IMR-90 (cell line): ENCODE measurements at regions of chr15 and their contacts with region 1.

Region 1: DNA sequence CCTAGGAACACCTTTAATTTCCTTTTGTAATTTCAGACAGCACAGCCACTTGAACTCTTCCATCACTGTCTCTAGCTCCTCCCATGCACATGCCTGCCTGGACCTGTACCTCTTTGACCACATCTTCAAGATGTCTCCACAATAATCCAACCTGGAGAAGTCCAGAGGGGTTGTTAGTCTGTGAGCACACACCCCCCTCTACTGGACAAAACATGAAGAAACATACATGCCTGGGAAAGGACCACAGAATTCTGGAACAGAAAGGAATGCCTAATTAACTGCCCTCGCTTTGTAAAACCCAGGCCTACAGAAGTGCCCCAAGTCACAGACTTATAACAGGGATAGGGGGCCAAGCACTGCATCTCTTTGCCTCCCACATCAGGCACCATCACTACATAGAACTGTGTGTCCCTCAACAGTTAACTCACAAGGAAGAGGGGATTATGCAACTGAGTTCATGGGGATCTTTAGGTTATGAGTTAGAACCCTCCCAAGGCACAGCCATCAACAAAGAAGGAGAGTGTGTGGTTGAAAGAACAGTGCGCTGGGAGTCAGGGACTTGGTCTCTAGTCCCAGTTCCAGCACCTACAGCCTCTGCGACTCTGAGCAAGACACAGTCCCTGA is 61.7 kb downstream of the FMN1 start:
- DNase-seq: peak; percentile 76
- ATAC-seq: peak; percentile 94
- H3K4me3 ChIP-seq: no peak overlapping the region
- H3K27ac ChIP-seq: no peak overlapping the region
- H3K4me1 ChIP-seq: peaks cover 11% of the 10 kb centered on the region
- H3K27me3 ChIP-seq: no peaks in the 10 kb centered on the region
- CTCF ChIP-seq: peak; percentile 89
- POLR2A ChIP-seq: no peak
- RAD21 ChIP-seq: peak; percentile 95

Region 2: DNA sequence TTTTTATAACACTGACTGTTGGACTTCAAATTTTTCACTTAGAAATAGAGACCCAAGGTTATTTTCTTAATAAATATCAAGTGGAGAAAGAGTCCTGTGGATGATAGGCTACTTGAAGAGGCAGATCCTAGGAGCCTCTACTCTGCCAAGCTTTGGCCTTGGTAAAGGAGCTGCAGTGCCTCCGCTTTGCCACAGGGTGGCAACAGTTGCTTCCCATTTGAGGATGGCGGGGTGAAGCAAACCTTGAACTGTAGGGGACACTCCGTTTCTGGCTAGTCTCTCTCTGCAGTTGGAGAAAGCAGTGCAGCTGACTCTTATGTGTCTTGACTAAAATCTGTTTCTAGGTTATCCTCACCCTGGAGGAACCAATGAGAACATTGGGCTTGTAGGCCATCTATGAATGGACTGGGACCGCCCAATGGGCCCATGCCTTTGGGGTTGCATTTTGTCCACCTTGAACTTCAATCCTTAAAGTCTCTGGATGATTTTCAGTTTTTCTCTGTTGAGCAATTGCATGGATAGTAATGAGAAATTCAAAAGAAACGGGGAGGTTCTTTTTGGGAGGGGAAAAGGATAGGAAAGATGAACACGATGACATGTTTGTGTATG is 481.5 kb before region 1 on chr15:
- CTCF ChIA-PET with region 1: interaction called, 9 read pairs
- POLR2A ChIA-PET with region 1: no interaction called
- dilution Hi-C with region 1: no loop called
- in situ Hi-C with region 1: loop called (anchors 5 kb)
- intact Hi-C with region 1: loop called (anchors 5 kb)
- DNase-seq: peak; percentile 73
- ATAC-seq: peak; percentile 97
- H3K4me3 ChIP-seq: no peak overlapping the region
- H3K27ac ChIP-seq: no peak overlapping the region
- H3K4me1 ChIP-seq: peaks cover 4% of the 10 kb centered on the region; the same call in 1 of the 2 replicates
- H3K27me3 ChIP-seq: no peaks in the 10 kb centered on the region
- CTCF ChIP-seq: peak; percentile 92
- POLR2A ChIP-seq: no peak
- RAD21 ChIP-seq: peak; percentile 91

Region 3: GRCh38 chr15:32828507-32829186 is 304.2 kb before region 1 on chr15:
- CTCF ChIA-PET with region 1: no interaction called
- POLR2A ChIA-PET with region 1: no interaction called
- dilution Hi-C with region 1: no loop called
- in situ Hi-C with region 1: no loop called
- intact Hi-C with region 1: loop called (anchors 1 kb)
- DNase-seq: peak; percentile 96
- ATAC-seq: peak; percentile 74
- H3K4me3 ChIP-seq: no peak overlapping the region
- H3K27ac ChIP-seq: peak overlapping the region; percentile 68
- H3K4me1 ChIP-seq: peaks cover 39% of the 10 kb centered on the region
- H3K27me3 ChIP-seq: no peaks in the 10 kb centered on the region
- CTCF ChIP-seq: no peak
- POLR2A ChIP-seq: no peak
- RAD21 ChIP-seq: peak; percentile 30; the same call in 1 of the 2 replicates

Region 4: GRCh38 chr15:32861761-32862160 is 271.1 kb before region 1 on chr15:
- CTCF ChIA-PET with region 1: no interaction called
- POLR2A ChIA-PET with region 1: no interaction called
- dilution Hi-C with region 1: no loop called
- in situ Hi-C with region 1: no loop called
- intact Hi-C with region 1: loop called (anchors 10 kb)
- DNase-seq: peak; percentile 73
- ATAC-seq: peak; percentile 63
- H3K4me3 ChIP-seq: no peak overlapping the region
- H3K27ac ChIP-seq: peak overlapping the region; percentile 95
- H3K4me1 ChIP-seq: peaks cover 21% of the 10 kb centered on the region
- H3K27me3 ChIP-seq: no peaks in the 10 kb centered on the region
- CTCF ChIP-seq: no peak
- POLR2A ChIP-seq: no peak
- RAD21 ChIP-seq: no peak

Region 5: DNA sequence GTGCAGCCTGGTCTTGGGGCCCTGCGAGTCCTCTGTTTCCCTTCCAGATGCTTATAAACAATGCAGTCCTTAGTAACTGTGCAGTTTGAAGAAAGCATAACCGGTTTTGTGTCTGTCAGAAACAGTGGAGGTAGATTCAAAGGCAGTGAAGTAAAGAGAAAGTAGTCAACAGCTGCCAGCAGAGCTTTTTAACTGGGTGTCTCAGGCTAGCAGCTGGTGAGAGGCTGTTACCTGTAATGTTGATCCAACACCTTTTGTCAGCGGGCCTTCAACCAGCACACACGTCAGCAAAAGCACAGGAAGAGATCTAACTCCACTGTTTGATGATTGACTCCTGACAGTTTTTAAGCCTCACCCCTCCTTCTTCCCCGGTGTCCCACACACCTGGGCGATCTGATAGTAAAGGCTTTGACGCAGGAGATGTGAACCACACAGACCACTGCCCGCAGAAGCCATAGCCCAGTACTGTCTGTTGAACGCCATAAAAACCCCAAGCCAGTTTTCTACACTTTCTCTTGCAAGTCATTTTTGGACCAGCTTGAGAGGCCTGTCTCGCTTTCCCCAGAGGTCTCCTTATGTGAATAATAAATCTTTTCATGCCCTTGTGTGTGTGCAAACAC is 116.3 kb before region 1 on chr15:
- CTCF ChIA-PET with region 1: interaction called, 7 read pairs
- POLR2A ChIA-PET with region 1: no interaction called
- dilution Hi-C with region 1: no loop called
- in situ Hi-C with region 1: loop called (anchors 5 kb)
- intact Hi-C with region 1: no loop called
- DNase-seq: no peak
- ATAC-seq: no peak
- H3K4me3 ChIP-seq: no peak overlapping the region
- H3K27ac ChIP-seq: no peak overlapping the region
- H3K4me1 ChIP-seq: peaks cover 8% of the 10 kb centered on the region
- H3K27me3 ChIP-seq: no peaks in the 10 kb centered on the region
- CTCF ChIP-seq: no peak
- POLR2A ChIP-seq: no peak
- RAD21 ChIP-seq: no peak

Region 6: DNA sequence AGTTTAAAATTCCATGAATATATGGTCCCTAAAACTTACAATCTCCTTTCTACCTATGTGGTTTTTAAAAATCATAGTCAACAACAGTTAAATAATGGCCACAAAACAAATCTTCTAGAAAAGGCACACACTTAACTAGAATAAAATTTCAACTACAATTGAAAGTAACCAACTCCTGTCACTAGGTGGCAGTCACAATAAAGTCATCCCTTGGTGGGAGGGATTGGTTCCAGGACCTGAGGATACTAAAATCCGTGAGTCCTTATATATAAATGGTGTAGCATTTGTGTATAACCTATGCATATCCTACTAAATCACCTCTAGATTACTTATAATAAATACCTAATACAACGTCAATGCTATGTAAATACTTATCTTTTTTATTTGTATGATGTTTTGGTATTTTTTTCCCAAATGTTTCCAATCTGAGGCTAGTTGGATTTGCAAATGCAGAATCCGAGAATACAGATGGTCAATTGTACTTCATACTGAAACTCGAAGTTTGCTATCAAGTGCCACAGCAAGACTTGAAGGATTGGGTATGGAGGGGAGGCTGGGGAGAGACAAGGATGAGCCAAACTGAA is 110.9 kb before region 1 on chr15:
- CTCF ChIA-PET with region 1: interaction called, 7 read pairs
- POLR2A ChIA-PET with region 1: no interaction called
- dilution Hi-C with region 1: no loop called
- in situ Hi-C with region 1: loop called (anchors 5 kb)
- intact Hi-C with region 1: loop called (anchors 1 kb)
- DNase-seq: peak; percentile 75
- ATAC-seq: peak; percentile 77
- H3K4me3 ChIP-seq: no peak overlapping the region
- H3K27ac ChIP-seq: peak overlapping the region; percentile 55; the same call in 1 of the 2 replicates
- H3K4me1 ChIP-seq: peaks cover 12% of the 10 kb centered on the region
- H3K27me3 ChIP-seq: no peaks in the 10 kb centered on the region
- CTCF ChIP-seq: peak; percentile 66
- POLR2A ChIP-seq: no peak
- RAD21 ChIP-seq: peak; percentile 75

Region 7: DNA sequence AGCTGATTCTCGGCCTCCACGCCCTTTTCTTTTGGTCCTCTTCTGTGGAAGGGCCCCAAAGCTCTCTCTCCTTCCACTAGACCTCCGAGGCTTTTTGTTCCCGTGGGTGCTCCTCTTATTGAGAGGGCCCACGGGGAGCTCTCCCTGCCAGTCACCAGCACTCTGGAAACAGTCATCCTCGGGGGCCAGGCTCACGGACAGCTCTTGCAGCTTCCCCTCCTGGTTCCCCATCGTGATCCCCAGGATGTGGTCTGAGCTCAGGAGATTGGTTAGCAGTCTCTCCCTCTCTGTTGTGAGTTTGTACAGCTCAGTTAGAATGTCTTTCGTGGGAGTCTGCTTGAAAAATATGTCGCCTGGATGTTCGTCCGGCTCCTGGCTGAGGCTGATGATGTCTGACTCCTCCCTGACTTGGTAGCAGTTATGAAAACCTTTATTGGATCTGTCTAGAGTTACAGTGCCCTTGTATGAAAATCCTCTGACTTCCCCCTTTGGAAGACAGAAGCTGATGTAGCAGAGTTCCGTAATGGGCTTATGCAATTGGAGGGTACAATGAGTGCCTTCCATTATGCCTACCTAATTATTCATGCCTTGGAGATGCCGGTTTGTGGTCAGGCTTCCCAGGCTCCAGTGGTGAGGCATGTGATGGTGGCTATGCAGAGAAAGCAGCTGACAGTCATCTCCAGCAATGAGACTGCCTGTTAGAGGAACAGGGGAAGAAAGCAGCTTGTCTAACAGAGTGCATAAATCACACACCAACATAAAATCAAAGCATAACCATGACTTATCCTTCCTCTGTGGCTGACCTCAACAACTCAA is 21.7 kb after region 1 on chr15:
- CTCF ChIA-PET with region 1: no interaction called
- POLR2A ChIA-PET with region 1: no interaction called
- dilution Hi-C with region 1: no loop called
- in situ Hi-C with region 1: no loop called
- intact Hi-C with region 1: no loop called
- DNase-seq: peak; percentile 55
- ATAC-seq: peak; percentile 29; the same call in 1 of the 2 replicates
- H3K4me3 ChIP-seq: no peak overlapping the region
- H3K27ac ChIP-seq: no peak overlapping the region
- H3K4me1 ChIP-seq: 0 out of 2 replicates have a peak, but pooled peaks cover 2% of the 10 kb centered on the region
- H3K27me3 ChIP-seq: peaks cover 13% of the 10 kb centered on the region
- CTCF ChIP-seq: no peak
- POLR2A ChIP-seq: no peak
- RAD21 ChIP-seq: no peak

Region 8: GRCh38 chr15:33168444-33168843 is 35.6 kb after region 1 on chr15:
- CTCF ChIA-PET with region 1: no interaction called
- POLR2A ChIA-PET with region 1: no interaction called
- dilution Hi-C with region 1: no loop called
- in situ Hi-C with region 1: no loop called
- intact Hi-C with region 1: no loop called
- DNase-seq: no peak
- ATAC-seq: no peak
- H3K4me3 ChIP-seq: no peak overlapping the region
- H3K27ac ChIP-seq: no peak overlapping the region
- H3K4me1 ChIP-seq: no peaks in the 10 kb centered on the region
- H3K27me3 ChIP-seq: peaks cover 20% of the 10 kb centered on the region
- CTCF ChIP-seq: no peak
- POLR2A ChIP-seq: no peak
- RAD21 ChIP-seq: no peak